ENCODE measurements at regions of chr2 and their contacts with region 1.

Region 1: DNA sequence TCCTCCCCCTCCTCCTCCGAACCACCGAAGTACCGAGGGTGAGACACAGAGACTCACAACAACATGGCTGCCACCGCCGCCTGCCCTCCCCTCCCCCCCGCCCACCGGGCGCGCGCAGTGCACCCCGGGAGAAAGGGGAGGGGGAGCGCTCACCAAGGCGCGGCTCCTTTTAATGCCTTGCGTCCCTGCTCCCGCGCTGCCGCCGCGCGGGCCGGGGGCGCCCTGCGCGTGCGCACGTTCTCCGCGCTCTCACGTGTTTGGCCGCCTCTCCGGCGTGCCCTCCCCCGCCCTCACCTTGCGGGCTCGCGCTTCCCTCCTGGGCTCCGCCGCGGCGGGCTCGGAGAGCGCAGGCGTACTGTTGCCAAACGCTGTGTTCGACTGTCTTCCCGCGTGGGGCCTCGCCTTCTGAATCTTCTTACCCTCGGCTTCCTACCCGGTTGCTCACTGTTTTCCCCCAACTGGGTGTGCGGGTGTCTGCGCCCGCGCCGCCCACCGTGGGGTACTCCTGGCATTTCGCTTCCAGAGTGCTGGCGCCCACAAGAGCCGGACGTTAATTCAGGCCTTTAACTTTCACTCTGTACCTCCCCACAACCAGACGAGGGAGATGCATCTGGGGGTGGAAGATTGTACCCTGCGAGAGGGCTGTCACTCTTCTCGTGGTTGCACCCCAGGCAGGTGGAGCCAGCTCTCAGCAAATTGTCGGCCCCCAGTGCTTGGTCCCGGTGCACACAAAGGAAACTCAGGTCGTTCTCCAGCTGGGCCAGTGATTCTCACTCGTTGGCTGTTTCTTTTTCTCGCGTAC is at the start of gene PUM2:
- DNase-seq: peak; percentile 91 to 98 (median 97)
- H3K4me3 ChIP-seq: peak within 1 kb of the TSS; percentile 88
- H3K4me3 Mint-ChIP-seq: peak within 1 kb of the TSS in 3 of 7 donors; percentile 92 to 94 (median 94)
- H3K27ac ChIP-seq: peak within 1 kb of the TSS; percentile 89
- H3K27ac Mint-ChIP-seq: peak within 1 kb of the TSS in 7 of 8 donors; percentile 27 to 95 (median 88)
- H3K4me1 ChIP-seq: peaks cover 50% of the 10 kb centered on the region
- H3K4me1 Mint-ChIP-seq: peaks cover 37 to 39% (median 39%) of the 10 kb centered on the region in 3 donors
- H3K27me3 ChIP-seq: no peaks in the 10 kb centered on the region
- H3K27me3 Mint-ChIP-seq: no peaks in the 10 kb centered on the region
- total RNA-seq, gene PUM2: 120 to 121 TPM

Region 2: GRCh38 chr2:20273045-20273444 is 77.9 kb before region 1 on chr2:
- CTCF ChIA-PET with region 1: no interaction called
- POLR2A ChIA-PET with region 1: no interaction called
- DNase-seq: no peak
- H3K4me3 ChIP-seq: no peak overlapping the region
- H3K4me3 Mint-ChIP-seq: no peak overlapping the region
- H3K27ac ChIP-seq: no peak overlapping the region
- H3K27ac Mint-ChIP-seq: no peak overlapping the region
- H3K4me1 ChIP-seq: no peaks in the 10 kb centered on the region
- H3K4me1 Mint-ChIP-seq: peaks cover 25 to 40% (median 26%) of the 10 kb centered on the region in 3 donors
- H3K27me3 ChIP-seq: no peaks in the 10 kb centered on the region
- H3K27me3 Mint-ChIP-seq: no peaks in the 10 kb centered on the region

Region 3: GRCh38 chr2:20326163-20326780 is 24.7 kb before region 1 on chr2:
- CTCF ChIA-PET with region 1: interaction called, 14 read pairs
- POLR2A ChIA-PET with region 1: no interaction called
- DNase-seq: peak; percentile 13 to 57 (median 27)
- H3K4me3 ChIP-seq: no peak overlapping the region
- H3K4me3 Mint-ChIP-seq: peak overlapping the region in 1 of 7 donors; percentile 16
- H3K27ac ChIP-seq: no peak overlapping the region
- H3K27ac Mint-ChIP-seq: peak overlapping the region in 7 of 8 donors; percentile 12 to 83 (median 61)
- H3K4me1 ChIP-seq: peaks cover 28% of the 10 kb centered on the region
- H3K4me1 Mint-ChIP-seq: peaks cover 65 to 91% (median 84%) of the 10 kb centered on the region in 3 donors
- H3K27me3 ChIP-seq: no peaks in the 10 kb centered on the region
- H3K27me3 Mint-ChIP-seq: no peaks in the 10 kb centered on the region